ENCODE measurements at regions of chr20 and their contacts with region 1.

Region 1: DNA sequence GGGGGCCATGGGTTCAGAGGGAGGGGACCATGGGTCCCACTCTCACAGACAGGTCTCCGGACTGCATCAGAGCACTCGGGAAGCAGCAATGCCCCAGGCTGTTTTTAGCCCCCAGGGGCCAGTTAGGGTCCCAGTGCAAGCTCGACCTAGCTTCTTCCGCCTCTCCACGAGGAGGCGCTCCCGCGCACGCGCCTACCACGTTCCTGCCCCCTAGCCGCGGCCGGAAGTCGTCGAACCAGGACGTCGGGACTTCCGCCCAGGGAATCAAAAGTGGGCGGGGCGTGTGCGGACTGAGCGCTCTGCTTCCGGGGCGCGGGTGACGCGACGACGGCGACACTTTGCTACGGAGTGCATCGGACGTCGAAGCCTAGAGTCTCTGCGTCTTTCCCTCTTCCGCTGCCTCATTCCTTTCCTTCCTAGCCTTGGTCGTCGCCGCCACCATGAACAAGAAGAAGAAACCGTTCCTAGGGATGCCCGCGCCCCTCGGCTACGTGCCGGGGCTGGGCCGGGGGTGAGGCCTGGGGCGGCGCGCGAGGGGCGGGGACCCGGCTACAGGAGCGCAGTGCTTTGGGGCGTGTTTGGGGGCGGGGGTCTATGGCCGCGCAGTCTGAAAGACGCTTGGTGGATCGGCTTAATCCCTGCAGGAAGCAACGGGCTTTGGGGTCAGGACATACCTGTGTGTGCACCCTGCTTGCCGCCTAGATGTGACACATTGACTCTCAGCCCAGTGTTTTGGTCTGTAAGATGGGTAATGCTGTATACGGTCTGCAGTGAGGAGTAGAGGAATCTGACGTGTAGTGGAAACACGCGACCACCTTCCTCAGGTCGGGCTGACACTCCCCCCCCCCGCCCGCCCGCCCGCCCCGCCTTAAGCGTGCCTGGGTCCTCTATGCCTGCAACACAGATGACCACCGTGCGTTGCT is at the start of gene PRPF6:
- DNase-seq: peak; percentile 89 to 97 (median 94)
- ATAC-seq: peak; percentile 56 to 65
- H3K4me3 Mint-ChIP-seq: peak within 1 kb of the TSS; percentile 84 to 98 (median 96)
- H3K27ac Mint-ChIP-seq: peak within 1 kb of the TSS; percentile 94 to 98 (median 96)
- H3K4me1 Mint-ChIP-seq: peaks cover 44 to 69% (median 65%) of the 10 kb centered on the region in 4 donors
- H3K27me3 Mint-ChIP-seq: no peaks in the 10 kb centered on the region
- polyA plus RNA-seq, gene PRPF6: 67.2 to 110 (median 85.9) TPM

Region 2: GRCh38 chr20:63955827-63956663 is 25.0 kb before region 1 on chr20 and contains the start of gene UCKL1:
- POLR2A ChIA-PET with region 1: interaction called, 19 read pairs
- DNase-seq: peak; percentile 83 to 95 (median 89)
- ATAC-seq: peak; percentile 81 to 85
- H3K4me3 Mint-ChIP-seq: peak within 1 kb of the TSS; percentile 76 to 89 (median 84)
- H3K27ac Mint-ChIP-seq: peak within 1 kb of the TSS; percentile 22 to 93 (median 82)
- H3K4me1 Mint-ChIP-seq: peaks cover 10 to 44% (median 30%) of the 10 kb centered on the region in 4 donors
- H3K27me3 Mint-ChIP-seq: no peaks in the 10 kb centered on the region
- polyA plus RNA-seq, gene UCKL1: 19.8 to 28.3 (median 21.0) TPM

Region 3: GRCh38 chr20:64062596-64063388 is 81.7 kb after region 1 on chr20 and contains the start of gene TCEA2:
- POLR2A ChIA-PET with region 1: interaction called, 14 read pairs
- DNase-seq: peak; percentile 82 to 94 (median 90)
- ATAC-seq: peak; percentile 94 to 97
- H3K4me3 Mint-ChIP-seq: peak within 1 kb of the TSS; percentile 81 to 92 (median 86)
- H3K27ac Mint-ChIP-seq: peak within 1 kb of the TSS; percentile 40 to 92 (median 76)
- H3K4me1 Mint-ChIP-seq: peaks cover 25 to 56% (median 51%) of the 10 kb centered on the region in 4 donors
- H3K27me3 Mint-ChIP-seq: no peaks in the 10 kb centered on the region
- polyA plus RNA-seq, gene TCEA2: 22.5 to 33.0 (median 32.1) TPM

Measured in naive thymus-derived CD8-positive, alpha-beta T cell (primary cell).